ENCODE measurements at regions of chr4 and their contacts with region 1.

Region 1: DNA sequence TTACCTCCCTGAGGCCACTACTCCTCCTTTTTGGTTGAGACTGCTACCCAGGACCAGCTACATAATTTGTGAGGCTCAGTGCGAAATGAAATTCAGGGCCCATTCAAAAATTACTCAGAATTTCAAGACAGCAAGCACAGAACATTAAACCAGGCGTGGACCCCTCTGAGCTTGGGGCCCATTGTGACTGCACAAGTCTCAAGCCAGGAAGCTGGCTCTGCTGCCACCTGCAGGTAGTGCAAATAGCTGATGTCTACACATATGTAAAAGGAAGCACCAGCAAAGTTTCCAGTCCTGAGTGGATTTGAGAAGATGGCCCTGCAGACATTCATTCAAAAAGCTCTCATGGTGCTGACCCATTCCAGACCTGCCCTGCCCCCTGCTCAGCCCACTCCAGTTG is 213.4 kb upstream of the LNX1 start:
- DNase-seq: peak; percentile 64 to 83 (median 70)
- ATAC-seq: peak; percentile 33
- H3K4me3 ChIP-seq: no peak overlapping the region
- H3K27ac ChIP-seq: no peak overlapping the region
- H3K4me1 ChIP-seq: no peaks in the 10 kb centered on the region
- H3K27me3 ChIP-seq: no peaks in the 10 kb centered on the region
- CTCF ChIP-seq: peak; percentile 40 to 71 (median 56)
- POLR2A ChIP-seq: no peak

Region 2: GRCh38 chr4:52946855-52947254 is 857.9 kb before region 1 on chr4:
- intact Hi-C with region 1: no loop called
- DNase-seq: no peak
- ATAC-seq: no peak
- H3K4me3 ChIP-seq: no peak overlapping the region
- H3K27ac ChIP-seq: no peak overlapping the region
- H3K4me1 ChIP-seq: peaks cover 5% of the 10 kb centered on the region
- H3K27me3 ChIP-seq: no peaks in the 10 kb centered on the region
- CTCF ChIP-seq: no peak
- POLR2A ChIP-seq: no peak

Region 3: GRCh38 chr4:53196882-53197771 is 607.6 kb before region 1 on chr4:
- intact Hi-C with region 1: loop called (anchors 10 kb)
- DNase-seq: peak in 1 of 4 donors; percentile 3
- ATAC-seq: peak; percentile 62
- H3K4me3 ChIP-seq: no peak overlapping the region
- H3K27ac ChIP-seq: no peak overlapping the region
- H3K4me1 ChIP-seq: no peaks in the 10 kb centered on the region
- H3K27me3 ChIP-seq: no peaks in the 10 kb centered on the region
- CTCF ChIP-seq: peak; percentile 45 to 80 (median 75)
- POLR2A ChIP-seq: no peak